Ascending aorta (tissue), 2 donors: ENCODE measurements at regions of chr12 and their contacts with region 1.

Region 1: GRCh38 chr12:6285063-6285477 is 25.4 kb upstream of the PLEKHG6 start:
- DNase-seq: no peak
- H3K4me3 ChIP-seq: no peak overlapping the region
- H3K27ac ChIP-seq: no peak overlapping the region
- H3K4me1 ChIP-seq: peaks cover 0 to 8% of the 10 kb centered on the region in 2 donors
- H3K27me3 ChIP-seq: no peaks in the 10 kb centered on the region
- CTCF ChIP-seq: peak; percentile 90 to 93 (median 91)

Region 2: DNA sequence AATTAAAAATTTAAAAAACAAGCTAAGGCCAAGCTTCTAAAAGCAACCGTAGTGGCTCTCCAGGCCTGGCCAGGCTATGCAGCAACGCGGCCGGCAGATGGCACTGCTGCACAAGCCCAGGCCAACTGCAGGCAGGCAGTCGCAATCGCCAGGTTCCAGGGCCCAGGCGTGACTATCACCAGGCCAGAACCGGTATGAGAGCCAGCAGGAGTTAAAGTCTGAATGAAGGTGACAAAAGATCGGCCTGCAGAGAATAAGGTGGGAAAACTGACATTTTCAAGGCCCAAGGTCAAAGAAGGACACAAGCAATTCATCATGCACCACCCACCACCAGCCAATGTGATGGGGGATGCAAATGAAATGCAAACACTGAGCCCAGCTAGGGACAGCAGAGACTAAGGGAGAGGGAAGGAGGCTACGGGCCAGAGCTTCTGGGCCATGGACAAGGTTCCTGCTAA is 296.4 kb before region 1 on chr12:
- intact Hi-C with region 1: loop called (anchors 2 kb)
- DNase-seq: peak in 1 of 2 donors; percentile 83
- H3K4me3 ChIP-seq: no peak overlapping the region
- H3K27ac ChIP-seq: no peak overlapping the region
- H3K4me1 ChIP-seq: no peaks in the 10 kb centered on the region
- H3K27me3 ChIP-seq: no peaks in the 10 kb centered on the region
- CTCF ChIP-seq: peak; percentile 90 to 99 (median 97)

Region 3: DNA sequence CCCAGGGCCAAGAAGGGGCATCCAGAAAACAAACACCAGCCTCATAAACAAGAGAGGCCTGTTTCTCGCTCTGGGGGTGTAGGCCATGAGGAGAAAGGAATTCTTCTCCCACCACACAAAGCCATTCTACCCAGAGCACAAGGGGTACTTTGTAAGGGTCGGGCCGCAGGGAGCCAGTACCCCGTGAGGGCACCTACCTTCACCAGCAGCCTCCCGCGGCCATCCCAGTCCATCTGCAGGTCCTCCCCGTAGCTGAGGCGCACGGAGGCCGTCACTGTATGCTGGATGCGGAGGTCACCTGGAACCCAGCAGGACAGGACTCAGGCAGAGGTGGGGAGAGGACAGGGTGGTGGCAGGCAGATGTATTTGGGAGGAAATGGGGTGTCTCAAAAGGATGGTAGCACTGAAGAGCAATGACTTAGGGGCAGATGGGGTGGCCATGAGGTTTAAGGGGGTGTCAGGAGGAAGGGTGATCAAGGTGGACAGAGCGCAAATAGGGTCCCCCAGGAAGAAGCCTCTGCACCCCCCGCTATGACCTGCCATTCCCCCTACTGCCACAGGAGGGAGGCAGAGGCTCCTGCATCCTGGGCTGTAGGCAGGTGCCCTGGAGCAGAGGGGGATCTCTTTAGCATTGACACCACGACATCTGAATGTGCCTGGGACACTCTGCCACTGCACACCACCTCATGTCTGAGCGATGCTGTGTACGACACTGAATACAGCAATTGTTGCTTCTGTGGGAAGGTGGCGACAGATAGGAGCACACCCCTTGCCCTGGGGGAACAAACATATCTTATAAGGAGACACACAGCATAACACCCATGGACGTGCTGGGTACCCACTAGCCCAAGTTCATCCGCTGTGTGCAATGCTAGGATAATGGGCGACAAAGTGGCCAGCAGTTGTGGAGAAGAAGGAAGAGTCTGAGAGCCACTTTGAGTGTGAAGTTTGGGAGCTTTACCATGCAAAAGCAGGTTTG is 222.0 kb before region 1 on chr12:
- intact Hi-C with region 1: loop called (anchors 1 kb)
- DNase-seq: no peak
- H3K4me3 ChIP-seq: no peak overlapping the region
- H3K27ac ChIP-seq: no peak overlapping the region
- H3K4me1 ChIP-seq: peaks cover 0 to 3% of the 10 kb centered on the region in 2 donors
- H3K27me3 ChIP-seq: no peaks in the 10 kb centered on the region
- CTCF ChIP-seq: peak; percentile 89 to 95 (median 94)